ENCODE measurements at regions of chr14 and their contacts with region 1.

Region 1: DNA sequence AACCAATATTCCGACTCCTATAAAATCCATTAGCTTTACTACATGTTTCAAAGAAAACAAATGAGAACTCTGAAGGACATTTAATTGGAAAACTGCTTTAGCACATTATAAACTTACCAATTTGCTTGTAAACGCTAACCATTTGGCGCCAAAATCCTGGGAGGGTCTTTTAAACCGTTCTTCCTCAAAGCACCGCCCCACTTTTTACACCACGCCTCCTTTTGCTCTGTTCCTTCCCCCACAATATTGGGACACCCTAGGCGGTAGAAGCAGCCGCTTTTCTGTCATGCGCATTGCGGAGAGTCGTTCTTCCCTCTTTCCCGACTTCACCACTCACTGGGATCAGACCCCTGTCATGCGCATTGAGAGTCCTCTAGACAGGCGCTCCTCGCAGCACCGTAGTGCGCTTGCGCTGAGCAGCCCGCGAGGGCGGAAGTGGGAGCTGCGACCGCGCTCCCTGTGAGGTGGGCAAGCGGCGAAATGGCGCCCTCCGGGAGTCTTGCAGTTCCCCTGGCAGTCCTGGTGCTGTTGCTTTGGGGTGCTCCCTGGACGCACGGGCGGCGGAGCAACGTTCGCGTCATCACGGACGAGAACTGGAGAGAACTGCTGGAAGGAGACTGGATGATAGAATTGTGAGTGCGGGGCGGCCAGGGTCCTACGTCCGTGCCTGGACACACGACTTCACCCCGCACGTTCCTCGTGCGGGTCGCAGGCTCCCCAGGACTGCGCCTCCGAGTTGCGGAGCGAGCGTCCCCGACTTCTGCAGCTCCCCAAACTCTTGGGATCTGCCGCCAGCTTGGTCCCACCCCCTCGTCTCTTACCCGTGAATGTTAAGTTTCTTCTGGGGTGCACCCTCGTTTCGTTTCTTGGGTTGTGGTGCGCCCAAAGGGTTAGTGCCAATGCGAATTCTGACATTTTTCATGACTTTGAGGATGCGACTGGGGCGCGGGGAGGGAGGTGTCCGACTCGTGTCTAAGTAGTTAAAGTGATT is at the start of gene TMX1:
- DNase-seq: peak; percentile 95
- H3K4me3 Mint-ChIP-seq: no peak within 1 kb of the TSS
- H3K27ac Mint-ChIP-seq: no peak within 1 kb of the TSS
- H3K4me1 Mint-ChIP-seq: peaks cover 28% of the 10 kb centered on the region
- H3K27me3 Mint-ChIP-seq: no peaks in the 10 kb centered on the region
- total RNA-seq, gene TMX1: 59.4 to 59.6 TPM

Region 2: DNA sequence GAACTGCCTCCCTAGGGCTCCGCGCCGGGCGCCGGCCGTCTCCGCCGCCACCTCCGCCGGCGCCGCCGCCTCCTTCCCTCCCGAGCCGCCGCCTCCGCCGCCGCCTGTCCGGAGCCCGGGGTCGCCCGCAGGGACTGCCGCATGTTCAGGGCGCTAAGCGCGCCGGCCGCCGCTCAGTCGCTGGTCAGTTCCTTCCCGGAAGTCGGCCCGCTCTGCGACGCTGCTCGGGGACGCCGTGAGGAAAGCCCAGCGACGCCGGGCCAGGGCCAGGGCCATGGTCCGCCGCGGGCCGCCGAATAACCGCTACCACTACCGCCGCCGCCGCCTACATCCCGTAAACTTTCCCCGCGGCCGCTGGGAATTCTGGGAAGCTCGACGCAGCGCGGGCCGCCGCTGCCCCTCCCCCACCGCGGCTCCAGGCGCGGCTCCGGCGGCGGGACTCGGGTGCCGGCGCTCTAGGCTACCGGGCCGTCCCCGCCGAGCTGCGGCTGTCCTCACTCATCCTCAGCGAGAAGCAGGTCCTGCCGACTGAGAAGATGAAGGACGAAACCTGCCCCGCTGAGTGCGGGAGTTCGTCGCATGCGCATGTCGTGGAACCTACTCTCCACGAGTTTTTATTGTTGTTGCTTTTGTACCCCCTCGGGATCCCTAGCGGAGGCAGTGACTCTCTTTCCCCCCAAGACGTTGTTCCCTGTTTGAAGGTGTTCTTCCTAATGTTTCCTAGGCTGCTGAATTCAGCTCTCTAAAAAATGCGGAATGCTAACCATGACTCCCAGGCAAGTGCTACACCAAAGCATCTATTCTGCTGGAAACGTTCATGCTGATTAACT is 571.9 kb before region 1 on chr14 and contains the start of gene SAV1:
- CTCF ChIA-PET with region 1: no interaction called
- intact Hi-C with region 1: loop called (anchors 10 kb)
- DNase-seq: peak; percentile 65
- H3K4me3 Mint-ChIP-seq: no peak within 1 kb of the TSS
- H3K27ac Mint-ChIP-seq: peak within 1 kb of the TSS; percentile 56
- H3K4me1 Mint-ChIP-seq: peaks cover 14% of the 10 kb centered on the region
- H3K27me3 Mint-ChIP-seq: no peaks in the 10 kb centered on the region
- total RNA-seq, gene SAV1: 12.7 to 13.5 TPM

Region 3: DNA sequence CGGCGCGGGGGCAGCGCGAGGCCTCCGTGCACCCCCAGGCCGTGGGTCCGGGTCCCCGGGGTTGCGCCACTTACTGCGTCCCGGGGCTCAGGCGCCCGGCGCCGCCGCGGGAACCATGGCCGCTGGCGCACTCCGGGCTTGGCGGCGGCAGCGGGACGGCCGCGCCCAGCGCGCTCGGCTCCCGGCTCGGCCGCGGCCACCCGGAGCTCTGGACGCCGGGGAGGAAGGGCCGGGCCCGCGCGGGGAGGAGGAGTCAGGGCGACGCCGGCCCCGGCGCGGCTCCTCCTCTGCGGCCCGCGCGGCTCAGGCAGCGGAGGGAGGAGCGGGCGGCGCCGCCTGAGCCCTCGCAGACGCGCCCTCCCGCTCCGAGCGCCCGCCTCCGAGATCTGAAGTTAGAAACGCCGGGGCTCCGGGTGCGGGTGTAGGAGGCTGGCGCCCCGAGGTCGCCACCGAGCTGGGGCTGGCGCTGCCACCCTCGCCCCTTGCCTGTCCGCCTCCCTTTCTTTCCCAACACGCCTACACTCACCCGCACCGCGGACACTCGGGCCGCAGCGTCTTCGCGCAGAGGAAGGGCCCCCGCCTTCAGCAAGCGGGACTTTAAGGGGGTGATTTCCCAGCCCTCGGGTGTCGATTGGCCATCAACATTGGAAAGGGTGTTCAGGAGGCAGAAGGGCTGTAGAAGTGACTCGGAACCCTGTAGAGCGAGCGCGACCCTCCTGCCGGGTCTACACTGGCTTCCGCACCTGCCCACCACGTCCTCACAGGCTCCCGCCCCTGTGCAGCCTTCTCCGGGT is 409.0 kb before region 1 on chr14 and contains the start of gene NIN:
- CTCF ChIA-PET with region 1: no interaction called
- intact Hi-C with region 1: loop called (anchors 2 kb)
- DNase-seq: peak; percentile 69
- H3K4me3 Mint-ChIP-seq: peak within 1 kb of the TSS; percentile 88
- H3K27ac Mint-ChIP-seq: peak within 1 kb of the TSS; percentile 83
- H3K4me1 Mint-ChIP-seq: peaks cover 62% of the 10 kb centered on the region
- H3K27me3 Mint-ChIP-seq: no peaks in the 10 kb centered on the region
- total RNA-seq, gene NIN: 56.9 to 57.9 TPM

Region 4: GRCh38 chr14:51119003-51119402 is 121.1 kb before region 1 on chr14:
- CTCF ChIA-PET with region 1: no interaction called
- intact Hi-C with region 1: no loop called
- DNase-seq: no peak
- H3K4me3 Mint-ChIP-seq: no peak overlapping the region
- H3K27ac Mint-ChIP-seq: no peak overlapping the region
- H3K4me1 Mint-ChIP-seq: no peaks in the 10 kb centered on the region
- H3K27me3 Mint-ChIP-seq: peaks cover 3% of the 10 kb centered on the region

Region 5: DNA sequence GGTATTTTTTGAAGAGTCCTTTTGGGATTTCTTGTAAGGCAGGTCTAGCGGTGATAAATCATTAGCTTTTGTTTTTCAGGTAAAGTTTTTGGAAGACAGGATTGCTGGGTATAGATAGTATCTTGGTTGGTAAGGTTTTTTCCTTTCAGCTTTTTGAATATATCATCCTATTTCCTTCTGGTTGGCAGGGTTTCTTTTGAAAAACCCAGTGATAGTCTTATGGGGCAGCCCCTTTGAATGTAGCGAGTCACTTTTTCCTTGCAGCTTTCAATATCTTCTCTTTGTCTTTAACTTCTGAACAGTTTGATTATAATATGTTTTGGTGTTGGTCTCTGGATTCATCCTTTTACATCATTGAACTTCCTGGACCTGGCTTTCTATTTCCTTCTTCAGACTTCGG is 20.1 kb after region 1 on chr14:
- CTCF ChIA-PET with region 1: no interaction called
- intact Hi-C with region 1: loop called (anchors 1 kb)
- DNase-seq: peak; percentile 42
- H3K4me3 Mint-ChIP-seq: no peak overlapping the region
- H3K27ac Mint-ChIP-seq: peak overlapping the region; percentile 71
- H3K4me1 Mint-ChIP-seq: peaks cover 24% of the 10 kb centered on the region
- H3K27me3 Mint-ChIP-seq: no peaks in the 10 kb centered on the region

Region 6: GRCh38 chr14:51298895-51299294 is 58.8 kb after region 1 on chr14:
- CTCF ChIA-PET with region 1: no interaction called
- intact Hi-C with region 1: loop called (anchors 2 kb)
- DNase-seq: peak; percentile 53
- H3K4me3 Mint-ChIP-seq: no peak overlapping the region
- H3K27ac Mint-ChIP-seq: no peak overlapping the region
- H3K4me1 Mint-ChIP-seq: peaks cover 12% of the 10 kb centered on the region
- H3K27me3 Mint-ChIP-seq: peaks cover 5% of the 10 kb centered on the region